ENCODE measurements at regions of chr16 and their contacts with region 1.

Region 1: DNA sequence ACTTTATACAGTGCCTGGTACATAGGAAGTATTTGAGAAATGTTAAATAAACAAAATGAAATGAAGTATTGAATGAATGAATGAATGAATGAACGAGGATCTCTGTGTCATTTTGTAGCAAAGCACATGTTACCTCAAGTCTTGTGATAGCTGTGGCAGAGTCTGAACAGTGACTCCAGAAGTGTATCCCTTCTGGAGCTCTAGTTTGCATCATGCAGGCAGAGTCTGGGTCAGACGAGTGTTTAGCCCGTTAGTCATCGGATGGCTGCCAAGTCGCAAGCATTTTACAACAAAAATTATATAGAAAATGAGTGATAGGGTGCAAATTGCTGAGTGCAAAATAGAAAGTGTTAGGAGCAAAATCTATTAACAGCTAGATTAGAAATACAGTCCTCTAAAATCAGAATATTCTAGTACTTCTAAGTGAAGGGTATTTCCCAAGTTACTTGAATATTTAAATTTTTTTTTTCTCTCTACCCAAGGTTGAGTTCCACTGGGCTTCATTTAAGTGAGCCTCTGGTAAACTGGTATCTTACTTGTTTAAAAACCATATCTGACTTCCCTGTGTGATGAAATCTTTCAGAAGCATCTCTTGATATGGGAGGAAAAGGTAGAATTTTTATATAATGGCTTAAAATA is 113.3 kb downstream of the FTO start:
- DNase-seq: peak; percentile 89
- H3K4me3 Mint-ChIP-seq: no peak overlapping the region
- H3K27ac Mint-ChIP-seq: peak overlapping the region; percentile 74
- H3K4me1 Mint-ChIP-seq: peaks cover 31% of the 10 kb centered on the region
- H3K27me3 Mint-ChIP-seq: no peaks in the 10 kb centered on the region
- CTCF ChIP-seq: no peak

Region 2: DNA sequence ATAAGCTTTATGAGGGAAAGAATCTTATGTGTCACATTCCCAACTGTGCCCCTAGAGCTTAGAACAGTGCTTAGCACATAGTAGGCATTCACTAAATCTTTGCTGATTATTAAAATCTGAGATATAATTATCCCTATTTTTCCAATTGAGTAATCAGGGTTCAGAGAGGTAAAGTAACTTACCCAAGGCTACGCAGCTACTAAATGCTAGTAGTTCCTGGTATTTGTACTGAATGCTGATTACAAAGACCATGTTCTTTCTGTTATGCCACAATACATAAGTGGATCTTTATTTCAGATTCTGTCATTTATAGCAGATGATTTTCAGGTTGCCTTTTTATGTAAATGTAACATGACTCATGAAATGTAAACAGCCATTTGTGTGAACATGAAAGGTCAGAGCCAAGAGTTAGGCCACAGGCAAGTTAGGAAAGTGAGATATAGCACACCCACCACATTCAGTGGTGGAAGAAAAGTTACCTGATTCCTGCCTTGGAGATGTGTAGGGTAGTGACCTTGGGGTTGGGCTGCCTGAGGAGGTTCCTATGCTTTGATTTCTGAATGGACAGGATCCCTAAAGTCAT is 36.1 kb before region 1 on chr16:
- CTCF ChIA-PET with region 1: interaction called, 5 read pairs
- POLR2A ChIA-PET with region 1: interaction called, 23 read pairs
- intact Hi-C with region 1: loop called (anchors 5 kb)
- DNase-seq: peak; percentile 81
- H3K4me3 Mint-ChIP-seq: no peak overlapping the region
- H3K27ac Mint-ChIP-seq: peak overlapping the region; percentile 78
- H3K4me1 Mint-ChIP-seq: peaks cover 64% of the 10 kb centered on the region
- H3K27me3 Mint-ChIP-seq: no peaks in the 10 kb centered on the region
- CTCF ChIP-seq: no peak

Region 3: DNA sequence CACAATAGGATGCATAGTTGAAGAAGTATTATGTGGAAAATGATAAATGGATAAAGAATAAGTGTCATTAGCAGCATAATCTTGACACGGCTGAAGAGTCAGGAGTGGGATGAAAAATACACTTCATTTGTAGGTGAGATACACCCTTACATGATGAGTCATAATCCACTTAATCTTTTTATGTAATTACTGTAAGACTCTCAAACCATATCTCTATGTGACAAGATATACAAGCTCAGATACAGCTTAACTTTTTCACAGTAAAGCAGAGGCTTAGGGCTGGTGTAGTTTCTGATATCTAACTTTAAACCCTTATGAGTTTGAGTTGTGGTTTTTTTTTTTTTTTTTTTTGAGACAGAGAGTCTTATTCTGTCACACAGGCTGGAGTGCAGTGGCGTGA is 12.1 kb before region 1 on chr16:
- CTCF ChIA-PET with region 1: interaction called, 7 read pairs
- POLR2A ChIA-PET with region 1: interaction called, 11 read pairs
- intact Hi-C with region 1: no loop called
- DNase-seq: no peak
- H3K4me3 Mint-ChIP-seq: no peak overlapping the region
- H3K27ac Mint-ChIP-seq: no peak overlapping the region
- H3K4me1 Mint-ChIP-seq: peaks cover 44% of the 10 kb centered on the region
- H3K27me3 Mint-ChIP-seq: no peaks in the 10 kb centered on the region
- CTCF ChIP-seq: no peak

Region 4: GRCh38 chr16:53865494-53865863 is 48.2 kb after region 1 on chr16:
- CTCF ChIA-PET with region 1: no interaction called
- POLR2A ChIA-PET with region 1: interaction called, 8 read pairs
- intact Hi-C with region 1: loop called (anchors 5 kb)
- DNase-seq: peak; percentile 79
- H3K4me3 Mint-ChIP-seq: peak overlapping the region; percentile 0
- H3K27ac Mint-ChIP-seq: peak overlapping the region; percentile 77
- H3K4me1 Mint-ChIP-seq: peaks cover 36% of the 10 kb centered on the region
- H3K27me3 Mint-ChIP-seq: no peaks in the 10 kb centered on the region
- CTCF ChIP-seq: no peak

Region 5: DNA sequence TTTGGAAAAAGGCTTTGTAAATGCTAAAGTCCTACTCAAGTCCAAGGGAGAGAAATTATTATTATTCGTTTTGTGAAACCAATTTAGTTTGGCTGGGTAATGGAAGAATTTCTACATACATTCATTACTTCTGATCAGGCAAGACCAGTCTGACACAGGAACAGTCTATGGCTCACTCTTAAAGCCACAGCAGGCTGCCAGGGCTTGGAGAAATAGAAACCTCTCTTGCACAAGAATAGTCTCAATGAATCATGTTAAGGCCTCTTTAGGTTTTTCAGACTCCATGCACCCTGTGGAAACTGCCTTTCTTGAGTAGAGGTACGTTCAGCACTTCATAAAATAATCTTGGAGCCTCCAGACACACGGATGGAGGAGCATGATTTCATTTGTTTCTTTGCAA is 301.6 kb after region 1 on chr16:
- CTCF ChIA-PET with region 1: no interaction called
- POLR2A ChIA-PET with region 1: no interaction called
- intact Hi-C with region 1: no loop called
- DNase-seq: peak; percentile 42
- H3K4me3 Mint-ChIP-seq: no peak overlapping the region
- H3K27ac Mint-ChIP-seq: no peak overlapping the region
- H3K4me1 Mint-ChIP-seq: peaks cover 7% of the 10 kb centered on the region
- H3K27me3 Mint-ChIP-seq: no peaks in the 10 kb centered on the region
- CTCF ChIP-seq: no peak